ENCODE measurements at regions of chr9 and their contacts with region 1.

Region 1: DNA sequence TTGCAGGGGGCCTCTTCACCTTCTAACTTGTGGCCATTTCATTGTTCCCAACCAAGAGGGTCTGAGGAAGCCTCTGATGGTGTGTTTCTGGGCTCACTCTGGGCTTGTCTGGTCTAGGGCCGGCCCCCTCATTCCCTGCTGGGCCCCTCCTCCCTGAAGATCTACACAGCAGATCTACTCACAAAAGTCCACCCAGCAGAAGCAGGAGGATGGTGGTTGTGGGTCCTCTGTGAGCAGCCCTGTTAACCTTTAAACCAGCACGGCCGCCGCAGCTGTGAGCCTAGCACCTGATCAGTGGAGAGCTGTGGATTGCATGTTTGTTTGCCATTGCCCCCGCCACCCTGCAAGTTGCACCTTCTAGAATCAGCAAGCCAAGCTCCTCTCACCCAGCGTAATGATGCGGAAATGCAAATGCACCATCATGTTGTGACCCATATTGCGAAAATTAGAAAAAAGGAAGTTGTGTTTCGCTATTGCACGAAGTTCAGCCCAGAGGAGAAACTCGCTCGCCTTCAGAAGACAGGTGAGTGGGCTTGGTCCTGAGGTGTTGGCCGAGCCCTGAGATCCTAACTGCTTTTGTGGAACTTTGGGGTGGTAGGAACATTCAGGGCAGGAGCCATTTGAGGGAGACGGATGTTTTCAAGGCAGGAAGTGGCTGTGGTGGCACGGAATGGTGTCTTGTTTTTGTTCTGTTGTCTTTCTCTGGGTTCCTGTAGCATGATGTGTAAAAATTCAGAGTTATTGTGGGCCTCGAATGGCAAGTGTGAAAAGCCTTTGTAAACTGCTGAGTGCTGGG is 16.7 kb downstream of the FGD3 start:
- DNase-seq: peak; percentile 47 to 96 (median 80)
- ATAC-seq: peak; percentile 66 to 73
- H3K4me3 Mint-ChIP-seq: peak overlapping the region; percentile 86 to 97 (median 92)
- H3K27ac Mint-ChIP-seq: peak overlapping the region; percentile 91 to 100 (median 98)
- H3K4me1 Mint-ChIP-seq: peaks cover 28 to 84% (median 60%) of the 10 kb centered on the region in 4 donors
- H3K27me3 Mint-ChIP-seq: no peaks in the 10 kb centered on the region

Region 2: DNA sequence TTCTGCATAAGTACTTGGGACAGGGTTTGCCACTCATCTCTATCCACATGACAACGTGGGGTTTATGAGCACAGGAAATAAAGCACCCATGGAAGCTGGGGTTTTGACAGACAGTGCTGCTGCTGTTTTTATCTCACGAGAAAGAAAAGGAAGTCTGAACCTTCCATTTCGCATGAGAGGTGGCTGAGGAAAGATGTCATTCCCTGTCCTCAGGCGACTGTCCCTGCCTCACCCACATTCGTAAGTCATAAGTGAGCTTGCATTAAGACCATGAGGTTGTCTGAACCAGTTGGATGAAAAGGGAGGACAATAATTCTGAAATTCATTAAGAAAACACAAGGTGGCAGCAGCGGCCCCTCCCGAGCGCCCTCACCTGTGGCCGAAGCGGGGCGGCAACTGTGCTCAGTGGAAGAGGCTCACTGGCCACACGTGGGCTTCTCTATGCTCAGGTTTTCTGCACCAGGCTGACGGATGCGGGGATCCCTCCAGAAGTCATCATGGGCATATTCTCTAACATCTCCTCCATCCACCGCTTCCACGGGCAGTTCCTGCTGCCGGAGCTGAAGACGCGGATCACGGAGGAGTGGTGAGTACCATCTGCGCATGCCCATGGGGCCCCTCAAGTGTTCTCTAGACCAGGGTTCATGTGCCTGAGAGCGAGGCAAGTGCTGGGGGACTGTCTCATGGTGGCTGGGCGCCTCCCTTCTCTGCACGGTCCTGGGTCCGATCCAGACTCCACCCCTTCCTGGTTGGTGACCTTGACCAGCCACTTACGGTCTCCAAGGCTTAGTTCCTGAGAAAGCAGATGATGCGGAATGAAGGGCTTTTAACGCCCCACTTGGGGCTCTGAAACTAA is 39.8 kb after region 1 on chr9:
- POLR2A ChIA-PET with region 1: interaction called, 77 read pairs
- DNase-seq: peak; percentile 45 to 77 (median 66)
- ATAC-seq: peak; percentile 74 to 80
- H3K4me3 Mint-ChIP-seq: peak overlapping the region; percentile 9 to 79 (median 65)
- H3K27ac Mint-ChIP-seq: peak overlapping the region; percentile 80 to 97 (median 92)
- H3K4me1 Mint-ChIP-seq: peaks cover 24 to 67% (median 52%) of the 10 kb centered on the region in 4 donors
- H3K27me3 Mint-ChIP-seq: no peaks in the 10 kb centered on the region

Region 3: DNA sequence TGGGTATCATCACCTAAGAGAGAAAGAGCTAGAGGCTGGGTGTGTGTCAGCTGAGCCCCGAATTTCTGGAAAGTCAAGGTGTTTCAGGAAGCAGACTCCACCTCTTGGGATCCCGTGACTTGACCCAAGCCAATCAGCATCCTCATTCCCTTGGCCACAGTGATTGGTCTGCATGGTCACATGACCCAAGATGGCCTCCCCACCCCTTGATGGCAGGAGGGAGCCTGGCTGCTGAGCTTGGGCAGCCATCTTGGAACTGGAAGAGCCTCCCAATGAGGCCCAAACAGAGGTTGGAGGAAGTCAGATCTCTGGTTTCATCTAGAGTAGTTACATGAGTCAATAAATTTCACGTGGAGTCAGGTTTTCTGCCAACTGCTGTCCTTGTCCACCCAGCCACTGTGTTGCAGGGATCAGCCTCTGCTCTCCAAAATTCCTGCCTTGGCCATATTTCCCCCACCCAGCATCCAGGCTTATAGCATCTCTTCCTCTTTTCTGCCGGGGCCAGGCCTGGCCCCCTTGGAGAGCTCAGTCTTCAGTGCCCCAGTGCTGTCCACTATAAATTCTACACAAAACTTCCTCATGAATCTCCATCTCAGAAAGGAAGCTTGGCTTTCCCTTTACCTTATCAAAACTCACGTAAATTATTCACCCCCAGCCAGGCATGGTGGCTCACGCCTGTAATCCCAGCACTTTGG is 77.2 kb after region 1 on chr9:
- POLR2A ChIA-PET with region 1: interaction called, 21 read pairs
- DNase-seq: no peak
- ATAC-seq: peak in 1 of 2 donors; percentile 29
- H3K4me3 Mint-ChIP-seq: peak overlapping the region in 3 of 10 donors; percentile 22 to 51 (median 36)
- H3K27ac Mint-ChIP-seq: peak overlapping the region; percentile 87 to 94 (median 92)
- H3K4me1 Mint-ChIP-seq: peaks cover 36 to 82% (median 76%) of the 10 kb centered on the region in 4 donors
- H3K27me3 Mint-ChIP-seq: no peaks in the 10 kb centered on the region

Region 4: DNA sequence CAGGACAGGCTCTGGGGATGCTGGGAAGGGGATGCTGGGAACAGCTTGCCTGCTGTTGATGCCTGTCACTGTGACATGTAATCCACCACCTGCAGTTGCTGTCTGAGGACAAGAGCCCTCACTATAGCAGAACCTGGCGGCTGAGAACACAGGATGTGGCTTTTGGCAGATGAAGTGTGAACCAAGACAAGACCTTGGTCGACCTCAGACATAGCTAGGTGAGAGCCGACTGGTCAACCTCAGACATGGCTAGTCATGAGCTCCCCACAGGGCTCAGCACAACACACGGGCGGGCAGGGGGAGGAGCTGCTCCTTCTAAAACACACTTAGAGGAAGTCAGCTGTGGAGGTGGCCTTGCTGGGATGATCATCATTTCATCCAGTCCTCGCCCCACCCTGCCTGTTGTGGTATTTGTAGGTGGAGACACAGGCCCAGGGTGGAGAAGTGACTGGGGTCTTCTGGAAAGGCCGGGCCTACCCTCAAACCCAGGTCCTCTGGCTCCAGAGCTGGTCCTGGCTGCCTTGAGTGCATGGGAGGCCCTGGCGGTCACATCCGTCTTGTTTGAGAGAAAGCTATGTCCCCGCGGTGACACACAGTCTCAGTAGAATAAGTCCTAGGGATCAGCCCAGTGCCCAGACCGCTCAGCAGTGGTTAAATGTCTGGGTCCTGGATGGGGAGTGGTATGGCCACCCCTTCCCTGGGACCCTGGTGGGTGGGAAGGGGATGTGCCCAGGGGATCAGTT is 100.5 kb after region 1 on chr9:
- POLR2A ChIA-PET with region 1: interaction called, 116 read pairs
- DNase-seq: peak; percentile 57 to 96 (median 89)
- ATAC-seq: peak; percentile 87 to 94
- H3K4me3 Mint-ChIP-seq: peak overlapping the region; percentile 81 to 96 (median 89)
- H3K27ac Mint-ChIP-seq: peak overlapping the region; percentile 93 to 100 (median 100)
- H3K4me1 Mint-ChIP-seq: peaks cover 48 to 94% (median 90%) of the 10 kb centered on the region in 4 donors
- H3K27me3 Mint-ChIP-seq: no peaks in the 10 kb centered on the region

Measured in naive thymus-derived CD8-positive, alpha-beta T cell (primary cell).